Left lung (tissue), 14 donors: ENCODE measurements at regions of chr16 and their contacts with region 1.

Region 1: DNA sequence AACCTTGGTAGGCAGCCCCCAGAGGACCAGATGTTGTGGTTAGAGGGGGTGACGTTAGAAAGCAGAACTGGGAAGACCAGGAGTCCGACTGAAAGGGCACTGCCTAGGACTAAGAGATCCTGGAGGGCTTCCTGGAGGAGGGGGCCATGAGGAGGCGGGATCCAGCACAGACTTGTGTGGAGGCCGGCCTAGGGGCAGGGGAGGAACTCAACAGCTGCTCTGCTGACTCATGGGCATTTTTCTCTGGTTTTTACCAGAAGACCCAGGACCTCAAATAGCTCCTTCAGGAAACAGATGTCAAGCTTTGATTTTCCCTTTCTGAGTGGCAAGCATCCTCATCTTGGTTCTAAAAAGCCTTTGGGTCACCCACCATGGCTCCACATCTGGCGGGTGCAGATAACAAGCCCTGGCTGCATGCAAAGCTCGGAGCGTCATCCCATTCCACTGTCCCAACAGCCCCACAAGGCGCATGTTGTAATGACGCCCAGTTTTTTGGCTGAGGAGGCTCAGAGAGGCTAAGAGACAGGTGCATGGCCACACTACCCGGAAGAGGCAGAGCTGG is 29.0 kb downstream of the IL21R start:
- DNase-seq: no peak
- ATAC-seq: peak; percentile 26
- H3K4me3 ChIP-seq: no peak overlapping the region
- H3K27ac ChIP-seq: no peak overlapping the region
- H3K4me1 ChIP-seq: peaks cover 0 to 17% of the 10 kb centered on the region in 2 donors
- H3K27me3 ChIP-seq: peaks cover 0 to 33% of the 10 kb centered on the region in 2 donors
- CTCF ChIP-seq: no peak

Region 2: GRCh38 chr16:27374804-27375425 is 56.1 kb before region 1 on chr16:
- intact Hi-C with region 1: loop called in 1 of 2 experiments (anchors 10 kb)
- DNase-seq: peak in 3 of 4 donors; percentile 36 to 81 (median 57)
- ATAC-seq: peak; percentile 81
- H3K4me3 ChIP-seq: peak overlapping the region in 1 of 2 donors; percentile 3
- H3K27ac ChIP-seq: peak overlapping the region; percentile 53 to 59
- H3K4me1 ChIP-seq: peaks cover 0 to 28% of the 10 kb centered on the region in 2 donors
- H3K27me3 ChIP-seq: no peaks in the 10 kb centered on the region
- CTCF ChIP-seq: peak; percentile 28 to 60

Region 3: GRCh38 chr16:27564224-27564623 is 133.2 kb after region 1 on chr16:
- intact Hi-C with region 1: no loop called
- DNase-seq: no peak
- ATAC-seq: no peak
- H3K4me3 ChIP-seq: no peak overlapping the region
- H3K27ac ChIP-seq: no peak overlapping the region
- H3K4me1 ChIP-seq: peaks cover 0 to 5% of the 10 kb centered on the region in 2 donors
- H3K27me3 ChIP-seq: no peaks in the 10 kb centered on the region
- CTCF ChIP-seq: no peak